ENCODE measurements at regions of chr14 and their contacts with region 1.

Region 1: DNA sequence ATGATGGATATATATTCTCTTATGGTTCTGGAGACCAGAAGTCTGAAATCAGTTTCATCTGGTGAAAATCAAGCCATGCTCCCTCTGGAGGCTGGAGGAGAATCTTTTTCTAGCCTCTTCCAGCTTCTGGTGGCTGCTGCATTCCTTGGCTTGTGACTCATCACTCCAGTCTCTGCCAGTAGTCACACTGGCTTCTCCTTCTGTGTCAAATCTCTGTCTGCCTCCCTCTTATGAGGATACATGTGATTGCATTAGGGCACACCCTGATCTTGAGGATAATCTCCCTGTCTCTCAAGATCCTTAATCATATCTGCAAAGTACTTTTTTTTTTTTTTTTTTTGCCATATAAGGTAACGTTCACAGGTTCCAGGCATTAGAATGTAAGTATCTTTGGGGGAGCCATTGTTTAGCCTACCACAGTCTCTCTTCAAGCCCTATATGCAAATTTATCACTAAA is 17.7 kb downstream of the DNAL1 start:
- DNase-seq: peak; percentile 66 to 93
- H3K4me3 ChIP-seq: no peak overlapping the region
- H3K27ac ChIP-seq: 0 out of 2 replicates have a peak overlapping the region, but pooled peaks have one; percentile 21
- H3K4me1 ChIP-seq: peaks cover 22% of the 10 kb centered on the region
- H3K27me3 ChIP-seq: no peaks in the 10 kb centered on the region
- CTCF ChIP-seq: peak; percentile 64

Region 2: DNA sequence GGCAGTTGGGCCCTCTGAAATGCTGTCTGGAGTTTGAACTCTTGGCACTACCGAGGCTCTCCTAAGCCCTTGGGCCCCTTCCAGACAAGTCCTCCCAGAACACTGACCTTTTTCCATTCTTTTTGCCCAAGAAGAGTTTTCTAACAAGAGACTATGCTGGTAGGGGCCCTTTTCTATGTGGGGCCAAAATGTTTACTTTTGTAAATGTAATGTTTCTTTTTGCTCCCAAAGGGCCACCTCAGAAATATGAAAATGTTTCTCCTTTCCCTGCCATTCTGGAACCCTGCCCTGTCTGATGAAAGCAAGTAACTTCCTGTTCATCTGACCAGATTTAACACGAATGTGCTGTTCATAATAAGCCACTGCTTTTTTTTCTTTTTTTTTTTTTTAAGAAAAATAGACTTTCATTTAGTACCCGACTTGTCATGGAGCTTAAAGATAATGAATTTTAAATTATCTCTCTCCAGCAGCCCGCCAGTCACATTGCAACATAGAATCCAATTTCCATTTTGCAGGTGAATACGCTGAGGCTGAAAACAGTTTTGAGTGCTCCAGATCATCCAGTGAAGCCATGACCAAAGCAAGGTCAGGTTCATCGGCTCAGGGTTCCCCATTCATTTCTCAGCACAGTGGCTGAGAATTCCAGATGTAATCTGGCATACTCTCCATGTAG is 938.5 kb before region 1 on chr14:
- CTCF ChIA-PET with region 1: no interaction called
- POLR2A ChIA-PET with region 1: no interaction called
- intact Hi-C with region 1: no loop called
- DNase-seq: no peak
- H3K4me3 ChIP-seq: no peak overlapping the region
- H3K27ac ChIP-seq: no peak overlapping the region
- H3K4me1 ChIP-seq: no peaks in the 10 kb centered on the region
- H3K27me3 ChIP-seq: peaks cover 78% of the 10 kb centered on the region
- CTCF ChIP-seq: no peak

Region 3: DNA sequence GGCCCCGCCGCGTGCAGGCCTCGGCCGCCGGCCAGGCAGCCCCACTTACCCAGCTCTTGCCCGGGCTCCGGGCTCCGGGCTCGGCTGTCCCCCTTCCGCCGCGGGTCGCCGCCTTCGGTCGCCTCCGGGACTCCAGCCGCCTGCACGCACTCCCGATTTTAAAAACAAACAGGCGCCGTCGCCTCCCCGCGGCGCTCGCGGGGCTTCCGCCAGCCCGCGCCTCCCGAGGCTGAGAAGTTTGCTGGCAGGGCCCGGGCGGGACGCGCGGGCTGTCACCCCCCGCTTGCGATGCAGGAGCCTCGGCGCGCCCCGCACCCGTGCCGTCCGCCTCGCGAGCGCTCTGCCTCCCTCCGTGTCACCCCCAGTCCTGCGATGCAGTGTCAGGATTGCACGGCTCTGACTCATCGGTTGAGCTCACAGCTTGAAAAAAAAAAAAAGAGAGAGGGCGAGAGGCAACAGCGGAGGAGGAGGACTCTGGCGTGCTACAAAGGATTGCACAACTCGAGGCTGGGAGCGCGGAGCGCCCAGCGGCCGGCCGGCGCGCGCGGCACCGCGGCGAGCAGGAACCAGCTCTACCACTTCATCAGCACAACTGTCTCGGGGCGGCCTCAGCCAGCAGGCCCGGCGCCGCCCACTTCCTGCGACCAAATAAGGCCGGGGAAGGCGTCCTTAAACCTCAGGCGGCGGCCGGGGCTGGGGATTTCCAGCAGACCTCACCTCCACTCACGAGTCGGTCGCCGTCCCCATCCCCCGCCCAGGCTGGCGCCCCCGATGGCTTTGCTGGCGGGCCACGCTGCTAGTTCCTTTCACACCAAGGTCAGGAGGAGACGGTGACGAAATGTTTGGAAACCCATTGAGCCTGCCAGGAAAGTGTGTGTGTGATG is 97.4 kb after region 1 on chr14:
- CTCF ChIA-PET with region 1: no interaction called
- POLR2A ChIA-PET with region 1: no interaction called
- intact Hi-C with region 1: loop called (anchors 5 kb)
- DNase-seq: peak; percentile 96
- H3K4me3 ChIP-seq: peak overlapping the region; percentile 90
- H3K27ac ChIP-seq: peak overlapping the region; percentile 76
- H3K4me1 ChIP-seq: peaks cover 54% of the 10 kb centered on the region
- H3K27me3 ChIP-seq: no peaks in the 10 kb centered on the region
- CTCF ChIP-seq: no peak